ENCODE measurements at regions of chr16 and their contacts with region 1.

Region 1: GRCh38 chr16:3214904-3215600 is 19.9 kb downstream of the ZNF200 start:
- DNase-seq: peak; percentile 84
- H3K4me3 Mint-ChIP-seq: peak overlapping the region; percentile 65
- H3K27ac Mint-ChIP-seq: peak overlapping the region; percentile 91
- H3K4me1 Mint-ChIP-seq: peaks cover 26% of the 10 kb centered on the region
- H3K27me3 Mint-ChIP-seq: no peaks in the 10 kb centered on the region

Region 2: DNA sequence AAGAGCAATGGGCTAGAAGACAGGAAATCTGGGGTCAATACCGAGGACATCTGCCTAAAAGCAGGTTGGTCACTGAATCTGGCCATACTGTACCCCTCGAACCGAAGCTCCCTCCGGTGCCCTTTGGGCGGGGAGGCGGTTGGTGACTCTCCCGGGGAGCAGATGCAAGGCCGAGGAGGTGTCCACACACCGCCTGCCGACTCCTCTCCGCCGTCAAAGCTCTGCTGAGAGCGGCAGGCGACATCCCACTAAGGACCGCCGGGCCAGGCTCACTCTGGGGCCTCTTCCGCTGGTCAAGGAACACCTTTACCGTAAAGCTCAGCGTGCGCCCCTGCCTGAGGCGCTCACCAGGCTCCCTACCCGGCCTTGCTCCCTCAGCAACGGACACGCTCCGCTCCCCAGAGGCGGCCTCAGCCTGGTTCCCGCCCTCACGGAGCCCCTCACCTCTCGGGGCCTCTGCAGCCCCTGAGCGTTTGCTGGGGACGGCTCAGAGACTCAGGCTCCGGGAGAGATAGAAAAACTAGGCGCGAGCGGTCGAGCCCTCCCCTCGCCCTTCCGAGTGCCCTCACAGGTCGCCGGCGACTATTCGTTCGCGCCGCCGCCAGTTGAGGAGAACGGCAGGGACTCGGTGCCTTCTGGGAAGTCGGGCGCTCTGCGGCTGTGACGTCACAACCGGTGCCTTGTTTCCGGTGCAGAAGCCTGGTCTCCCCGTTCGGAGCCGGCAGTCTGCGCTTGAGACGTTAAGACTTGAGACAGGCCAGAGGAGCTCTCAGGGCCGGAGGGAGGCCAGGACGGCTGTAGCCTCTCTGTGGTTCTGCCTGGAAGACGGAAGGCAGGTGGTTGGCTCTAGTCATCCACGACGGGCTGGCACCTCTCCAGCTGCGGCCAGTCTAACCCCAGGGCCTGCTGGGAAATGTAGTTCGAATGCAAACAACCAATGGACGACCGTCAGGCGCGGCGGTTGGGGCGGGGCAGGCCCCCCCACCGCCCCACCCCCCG is 19.8 kb after region 1 on chr16 and contains the start of gene ZNF200:
- intact Hi-C with region 1: loop called (anchors 2 kb)
- DNase-seq: peak; percentile 98
- H3K4me3 Mint-ChIP-seq: peak within 1 kb of the TSS; percentile 91
- H3K27ac Mint-ChIP-seq: peak within 1 kb of the TSS; percentile 95
- H3K4me1 Mint-ChIP-seq: peaks cover 20% of the 10 kb centered on the region
- H3K27me3 Mint-ChIP-seq: no peaks in the 10 kb centered on the region
- total RNA-seq, gene ZNF200: 13.1 and 13.4 TPM in 2 replicates

Measured in activated CD4-positive, alpha-beta T cell treated with anti-CD3 and anti-CD28 coated beads, Interleukin-2, amount 10 ng/mL, durations not matched to agents 24 days and 14 days (primary cell).